ENCODE measurements at regions of chr14 and their contacts with region 1.

Region 1: GRCh38 chr14:55094321-55095157 is 34.5 kb upstream of the LGALS3 start:
- DNase-seq: peak; percentile 42
- H3K4me3 Mint-ChIP-seq: no peak overlapping the region
- H3K27ac Mint-ChIP-seq: no peak overlapping the region
- H3K4me1 Mint-ChIP-seq: peaks cover 17% of the 10 kb centered on the region
- H3K27me3 Mint-ChIP-seq: no peaks in the 10 kb centered on the region
- CTCF ChIP-seq: no peak

Region 2: DNA sequence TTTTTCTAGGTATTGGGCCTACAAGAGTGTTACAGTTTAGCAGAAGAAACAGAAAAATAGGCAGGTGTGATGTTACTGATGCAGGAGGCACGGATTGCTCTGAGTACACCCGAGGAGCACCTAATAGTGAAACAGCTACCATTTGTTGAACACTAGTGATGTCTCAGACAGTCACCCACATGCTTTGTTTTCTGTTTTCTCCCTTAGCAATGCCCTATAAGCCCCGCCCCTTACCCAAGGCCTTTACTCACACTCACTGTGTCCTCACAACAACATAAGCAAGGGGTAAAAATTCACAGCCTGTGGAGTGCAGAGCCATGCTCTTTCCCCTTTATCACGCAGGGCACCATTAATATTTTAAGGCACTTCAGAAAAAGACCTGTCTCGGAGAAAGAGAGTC is 17.4 kb before region 1 on chr14:
- CTCF ChIA-PET with region 1: interaction called, 25 read pairs
- POLR2A ChIA-PET with region 1: interaction called, 140 read pairs
- intact Hi-C with region 1: no loop called
- DNase-seq: peak; percentile 83
- H3K4me3 Mint-ChIP-seq: peak overlapping the region; percentile 70
- H3K27ac Mint-ChIP-seq: peak overlapping the region; percentile 100
- H3K4me1 Mint-ChIP-seq: peaks cover 50% of the 10 kb centered on the region
- H3K27me3 Mint-ChIP-seq: no peaks in the 10 kb centered on the region
- CTCF ChIP-seq: no peak

Region 3: GRCh38 chr14:55107766-55108554 is 13.4 kb after region 1 on chr14:
- CTCF ChIA-PET with region 1: interaction called, 15 read pairs
- POLR2A ChIA-PET with region 1: interaction called, 24 read pairs
- intact Hi-C with region 1: no loop called
- DNase-seq: peak; percentile 95
- H3K4me3 Mint-ChIP-seq: peak overlapping the region; percentile 61
- H3K27ac Mint-ChIP-seq: peak overlapping the region; percentile 99
- H3K4me1 Mint-ChIP-seq: peaks cover 22% of the 10 kb centered on the region
- H3K27me3 Mint-ChIP-seq: no peaks in the 10 kb centered on the region
- CTCF ChIP-seq: no peak

Region 4: DNA sequence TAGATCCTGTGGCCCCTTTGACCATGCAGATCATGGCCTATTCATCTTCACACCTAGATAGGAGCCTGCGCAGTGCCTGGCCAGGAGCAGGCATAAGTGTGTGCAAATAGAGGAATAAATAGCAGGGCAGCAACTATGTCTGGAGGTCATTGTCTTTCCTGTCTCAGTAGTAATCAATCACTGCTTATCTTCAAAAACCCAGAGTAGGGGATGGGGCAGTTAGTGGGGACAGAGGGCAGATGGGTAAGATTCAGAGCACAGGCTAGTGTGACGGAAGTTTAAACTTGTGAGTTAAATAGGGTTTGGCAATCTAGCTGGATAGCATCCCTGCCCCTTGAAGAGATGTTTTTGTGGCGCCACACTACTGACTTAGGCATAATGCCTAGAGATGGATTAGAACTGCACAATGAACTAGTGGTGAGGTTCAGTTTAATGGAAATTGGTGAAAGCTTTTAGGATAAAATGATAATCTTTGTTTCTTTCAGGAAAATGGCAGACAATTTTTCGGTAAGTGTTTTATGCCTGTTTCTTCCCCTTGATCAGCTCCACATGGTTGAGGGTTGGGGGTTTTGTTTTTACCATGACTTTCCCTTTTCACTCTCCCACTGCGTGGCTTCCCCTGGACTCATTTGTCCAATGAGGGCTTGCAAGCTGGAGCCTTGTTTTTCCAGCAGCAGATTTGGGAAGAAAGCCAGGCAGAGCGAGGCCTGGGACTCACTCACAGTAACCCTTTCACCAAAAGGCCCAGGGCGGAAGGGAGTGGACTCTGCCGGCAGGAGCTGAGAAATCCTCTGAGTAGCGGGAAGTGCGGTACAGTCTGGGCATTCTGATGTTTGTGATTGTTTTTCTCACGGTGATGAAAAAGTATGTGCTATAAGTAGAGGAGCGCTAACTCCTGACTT is 42.6 kb after region 1 on chr14:
- CTCF ChIA-PET with region 1: interaction called, 17 read pairs
- POLR2A ChIA-PET with region 1: interaction called, 79 read pairs
- intact Hi-C with region 1: no loop called
- DNase-seq: peak; percentile 62
- H3K4me3 Mint-ChIP-seq: peak overlapping the region; percentile 47
- H3K27ac Mint-ChIP-seq: peak overlapping the region; percentile 76
- H3K4me1 Mint-ChIP-seq: peaks cover 24% of the 10 kb centered on the region
- H3K27me3 Mint-ChIP-seq: no peaks in the 10 kb centered on the region
- CTCF ChIP-seq: no peak

Region 5: GRCh38 chr14:55152052-55152753 is 57.7 kb after region 1 on chr14:
- CTCF ChIA-PET with region 1: interaction called, 14 read pairs
- POLR2A ChIA-PET with region 1: interaction called, 5 read pairs
- intact Hi-C with region 1: no loop called
- DNase-seq: peak; percentile 25
- H3K4me3 Mint-ChIP-seq: no peak overlapping the region
- H3K27ac Mint-ChIP-seq: peak overlapping the region; percentile 74
- H3K4me1 Mint-ChIP-seq: no peaks in the 10 kb centered on the region
- H3K27me3 Mint-ChIP-seq: no peaks in the 10 kb centered on the region
- CTCF ChIP-seq: no peak

Region 6: GRCh38 chr14:55160989-55161388 is 66.5 kb after region 1 on chr14:
- CTCF ChIA-PET with region 1: interaction called, 77 read pairs
- POLR2A ChIA-PET with region 1: interaction called, 7 read pairs
- intact Hi-C with region 1: loop called (anchors 1 kb)
- DNase-seq: peak; percentile 37
- H3K4me3 Mint-ChIP-seq: no peak overlapping the region
- H3K27ac Mint-ChIP-seq: peak overlapping the region; percentile 14
- H3K4me1 Mint-ChIP-seq: peaks cover 6% of the 10 kb centered on the region
- H3K27me3 Mint-ChIP-seq: no peaks in the 10 kb centered on the region
- CTCF ChIP-seq: peak; percentile 46